ENCODE measurements at regions of chr5 and their contacts with region 1.

Region 1: DNA sequence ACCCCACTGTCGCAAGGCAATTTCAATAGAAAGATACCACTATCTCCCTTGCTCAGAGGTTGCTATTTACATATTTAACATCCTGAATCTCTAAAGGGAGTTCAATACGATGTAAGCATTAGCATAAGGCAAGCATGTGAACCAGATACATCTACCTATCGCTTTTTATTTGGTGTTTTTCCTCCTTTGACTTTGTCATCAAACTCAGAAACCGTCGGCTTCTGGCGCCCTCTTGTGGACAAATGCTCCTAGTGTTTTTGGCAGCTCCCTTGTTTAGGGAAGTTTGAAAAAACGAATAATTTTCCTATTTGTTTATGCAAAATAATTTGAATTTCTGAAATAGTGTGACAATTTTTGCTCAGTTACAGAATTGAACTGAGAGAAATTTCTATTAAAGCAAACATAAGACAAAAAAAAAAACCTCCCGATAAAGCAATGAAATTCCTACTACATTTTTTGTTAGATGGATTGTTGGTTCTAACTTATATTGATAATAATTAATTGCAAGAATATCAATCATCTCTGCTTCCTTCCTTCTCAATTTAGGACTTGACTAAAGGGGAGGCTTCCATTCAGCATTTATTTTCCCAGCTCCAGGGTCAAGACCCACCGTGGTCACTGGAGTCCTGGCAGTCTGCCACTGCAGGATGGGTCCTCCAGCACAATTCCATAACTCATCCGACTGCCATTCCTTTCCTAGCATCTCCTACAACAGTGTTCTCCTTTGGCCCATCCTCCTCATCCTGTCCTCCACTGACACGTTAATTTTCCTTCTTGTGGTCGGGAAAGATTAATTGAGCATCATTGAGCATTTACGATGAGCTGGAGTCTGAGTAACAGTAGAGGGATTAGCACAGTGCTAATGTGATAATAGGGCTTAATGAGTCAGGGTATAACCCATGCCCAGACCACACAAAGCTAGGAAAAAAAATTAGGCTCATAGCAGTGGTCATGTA is 131.8 kb upstream of the CHD1 start:
- DNase-seq: peak; percentile 78 to 90
- ATAC-seq: peak; percentile 68 to 79 (median 74)
- H3K4me3 ChIP-seq: no peak overlapping the region
- H3K4me3 Mint-ChIP-seq: no peak overlapping the region
- H3K27ac ChIP-seq: no peak overlapping the region
- H3K27ac Mint-ChIP-seq: no peak overlapping the region
- H3K4me1 ChIP-seq: no peaks in the 10 kb centered on the region
- H3K4me1 Mint-ChIP-seq: peaks cover 0 to 22% of the 10 kb centered on the region in 2 donors
- H3K27me3 ChIP-seq: no peaks in the 10 kb centered on the region
- H3K27me3 Mint-ChIP-seq: peaks cover 18% of the 10 kb centered on the region in 2 donors
- CTCF ChIP-seq: peak; percentile 98

Region 2: GRCh38 chr5:98905857-98906690 is 154.5 kb before region 1 on chr5:
- intact Hi-C with region 1: loop called (anchors 1 kb)
- DNase-seq: peak in 1 of 2 donors; percentile 75
- ATAC-seq: peak; percentile 63 to 80 (median 64)
- H3K4me3 ChIP-seq: no peak overlapping the region
- H3K4me3 Mint-ChIP-seq: no peak overlapping the region
- H3K27ac ChIP-seq: no peak overlapping the region
- H3K27ac Mint-ChIP-seq: peak overlapping the region; percentile 19 to 63
- H3K4me1 ChIP-seq: no peaks in the 10 kb centered on the region
- H3K4me1 Mint-ChIP-seq: peaks cover 40 to 43% of the 10 kb centered on the region in 2 donors
- H3K27me3 ChIP-seq: no peaks in the 10 kb centered on the region
- H3K27me3 Mint-ChIP-seq: no peaks in the 10 kb centered on the region
- CTCF ChIP-seq: peak; percentile 94

Measured in natural killer cell (primary cell).